ENCODE measurements at regions of chr1 and their contacts with region 1.

Region 1: DNA sequence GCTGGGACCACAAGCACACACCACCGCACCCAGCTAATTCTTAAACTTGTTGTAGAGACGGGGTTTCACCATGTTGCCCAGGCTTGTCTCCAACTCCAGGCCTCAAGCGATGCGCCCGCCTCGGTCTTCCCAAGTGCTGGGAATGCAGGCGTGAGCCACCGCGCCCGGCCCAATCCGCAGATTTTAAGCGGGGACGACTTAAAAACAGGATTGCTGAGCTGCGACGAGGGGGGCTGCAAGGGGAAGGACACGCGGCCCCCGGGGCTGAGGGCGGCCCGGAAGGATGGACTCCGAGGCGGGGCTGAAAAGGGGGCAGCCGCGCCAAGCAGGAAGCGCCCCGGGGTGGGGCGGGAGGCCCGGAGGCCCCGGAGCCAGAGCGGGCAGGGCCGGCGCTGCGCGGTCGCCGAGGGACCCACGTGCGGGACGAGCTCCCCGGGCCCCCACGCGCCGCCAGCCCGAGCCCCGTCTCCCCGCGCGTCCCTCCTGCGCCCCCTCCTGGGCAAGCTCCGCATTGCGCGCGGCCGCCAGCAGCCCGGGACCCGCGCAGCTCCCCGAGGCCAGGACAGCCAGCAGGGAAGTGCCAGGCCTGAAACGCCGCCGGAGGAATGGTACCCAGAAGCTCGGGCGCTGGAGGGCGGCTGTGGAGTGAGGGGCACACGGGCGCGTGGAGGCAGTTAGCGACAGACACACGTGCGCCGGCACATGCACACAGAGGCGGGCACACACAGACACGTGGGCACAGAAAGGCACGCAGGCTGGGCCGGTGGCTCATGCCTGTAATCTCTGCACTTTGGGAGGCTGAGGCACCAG is 5.5 kb upstream of the PRKCZ start:
- DNase-seq: peak; percentile 73 to 88 (median 76)
- ATAC-seq: peak; percentile 59
- H3K4me3 ChIP-seq: no peak overlapping the region
- H3K4me1 ChIP-seq: peaks cover 42% of the 10 kb centered on the region
- CTCF ChIP-seq: peak; percentile 95

Region 2: GRCh38 chr1:1929639-1930471 is 114.9 kb before region 1 on chr1:
- intact Hi-C with region 1: no loop called
- DNase-seq: peak in 1 of 3 donors; percentile 47
- ATAC-seq: no peak
- H3K4me3 ChIP-seq: no peak overlapping the region
- H3K4me1 ChIP-seq: no peaks in the 10 kb centered on the region
- CTCF ChIP-seq: no peak

Region 3: DNA sequence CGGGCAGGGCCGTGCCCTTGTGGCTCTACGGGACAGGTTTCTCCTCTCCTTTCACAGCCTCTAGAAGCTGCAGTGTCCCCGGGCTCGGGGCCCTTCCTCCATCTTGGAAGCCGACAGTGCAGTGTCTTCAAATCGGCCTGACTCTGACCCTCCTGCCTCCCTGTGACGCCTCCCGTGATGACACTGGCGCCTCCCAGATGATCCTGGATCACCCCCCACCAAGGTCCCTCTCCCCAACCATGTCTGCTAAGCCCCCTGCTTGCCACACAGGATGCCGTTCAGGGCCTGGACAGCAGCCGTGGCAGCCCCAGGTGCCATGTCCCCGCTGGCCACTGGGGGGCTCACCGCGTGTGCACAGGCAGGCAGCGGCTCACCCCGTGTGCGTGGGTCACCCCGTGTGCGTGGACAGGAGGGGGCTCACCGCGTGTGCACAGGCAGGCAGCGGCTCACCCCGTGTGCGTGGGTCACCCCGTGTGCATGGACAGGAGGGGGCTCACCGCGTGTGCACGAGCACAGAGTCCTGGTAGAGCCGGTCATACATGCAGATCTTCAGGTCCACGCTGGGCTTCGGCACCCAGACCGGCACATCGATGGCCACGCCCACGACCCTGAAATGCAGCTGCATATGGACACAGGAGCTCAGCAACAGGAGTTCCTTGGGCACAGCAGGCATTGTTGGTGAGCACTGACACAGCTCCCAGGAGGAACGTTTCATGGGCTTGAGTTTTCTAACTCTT is 100.7 kb before region 1 on chr1:
- intact Hi-C with region 1: loop called (anchors 10 kb)
- DNase-seq: peak; percentile 60 to 71 (median 62)
- ATAC-seq: peak; percentile 84
- H3K4me3 ChIP-seq: no peak overlapping the region
- H3K4me1 ChIP-seq: peaks cover 7% of the 10 kb centered on the region
- CTCF ChIP-seq: peak; percentile 87